Activated T-helper 2 cell treated with anti-CD3 and anti-CD28 coated beads, Interferon-gamma antibody, Interleukin-2, Interleukin-4, amounts not matched to agents 10 μg/mL and 5 μg/mL and 100 μg/mL, durations not matched to agents 14 hours and 24 hours and 36 hours (primary cell): ENCODE measurements at regions of chr2 and their contacts with region 1.

Region 1: GRCh38 chr2:25201265-25201664 is 32.9 kb upstream of the POMC start:
- DNase-seq: no peak
- H3K4me3 Mint-ChIP-seq: no peak overlapping the region
- H3K27ac Mint-ChIP-seq: no peak overlapping the region
- H3K4me1 Mint-ChIP-seq: peaks cover 2% of the 10 kb centered on the region
- H3K27me3 Mint-ChIP-seq: peaks cover 14% of the 10 kb centered on the region

Region 2: DNA sequence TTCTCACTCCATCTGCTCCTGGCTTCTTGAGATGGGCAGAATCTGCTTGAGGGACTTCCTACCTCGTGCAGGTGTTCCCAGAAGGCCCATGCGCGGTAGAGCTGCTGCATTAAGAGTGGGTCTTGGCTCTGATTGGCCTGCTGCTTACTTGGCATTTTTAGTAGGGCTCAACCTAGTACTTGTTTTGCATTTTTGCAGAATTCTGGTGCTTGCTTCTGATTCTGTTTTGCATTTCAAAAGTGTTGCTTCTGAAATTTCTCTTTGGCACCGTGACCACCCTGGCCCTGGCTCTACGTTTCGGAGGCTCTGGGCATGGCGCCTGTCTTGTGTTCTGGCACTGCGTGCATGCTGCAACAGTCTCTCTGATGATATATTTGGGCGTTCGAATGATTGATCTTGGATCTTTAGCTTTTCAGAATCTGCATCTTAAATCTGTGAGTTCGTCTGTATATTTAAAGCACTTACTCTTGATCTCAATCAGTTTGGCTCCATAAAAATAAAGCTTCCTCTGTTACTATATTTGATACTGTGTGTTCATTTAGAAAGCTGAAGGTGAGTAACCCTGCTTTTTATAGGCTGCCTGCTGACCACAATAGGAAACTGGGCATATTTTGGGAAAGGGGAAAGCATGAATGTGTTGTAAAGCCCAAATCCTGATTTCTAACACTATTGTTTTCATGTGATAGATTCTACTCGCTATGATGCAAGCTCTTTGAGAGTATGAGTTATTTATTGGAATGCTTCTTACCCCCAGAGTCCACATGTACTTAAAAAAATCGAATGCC is 137.2 kb before region 1 on chr2:
- intact Hi-C with region 1: no loop called
- DNase-seq: no peak
- H3K4me3 Mint-ChIP-seq: no peak overlapping the region
- H3K27ac Mint-ChIP-seq: no peak overlapping the region
- H3K4me1 Mint-ChIP-seq: no peaks in the 10 kb centered on the region
- H3K27me3 Mint-ChIP-seq: no peaks in the 10 kb centered on the region

Region 3: GRCh38 chr2:25131567-25132298 is 69.5 kb before region 1 on chr2:
- intact Hi-C with region 1: loop called (anchors 10 kb)
- DNase-seq: no peak
- H3K4me3 Mint-ChIP-seq: peak overlapping the region; percentile 45
- H3K27ac Mint-ChIP-seq: no peak overlapping the region
- H3K4me1 Mint-ChIP-seq: peaks cover 2% of the 10 kb centered on the region
- H3K27me3 Mint-ChIP-seq: peaks cover 53% of the 10 kb centered on the region

Region 4: DNA sequence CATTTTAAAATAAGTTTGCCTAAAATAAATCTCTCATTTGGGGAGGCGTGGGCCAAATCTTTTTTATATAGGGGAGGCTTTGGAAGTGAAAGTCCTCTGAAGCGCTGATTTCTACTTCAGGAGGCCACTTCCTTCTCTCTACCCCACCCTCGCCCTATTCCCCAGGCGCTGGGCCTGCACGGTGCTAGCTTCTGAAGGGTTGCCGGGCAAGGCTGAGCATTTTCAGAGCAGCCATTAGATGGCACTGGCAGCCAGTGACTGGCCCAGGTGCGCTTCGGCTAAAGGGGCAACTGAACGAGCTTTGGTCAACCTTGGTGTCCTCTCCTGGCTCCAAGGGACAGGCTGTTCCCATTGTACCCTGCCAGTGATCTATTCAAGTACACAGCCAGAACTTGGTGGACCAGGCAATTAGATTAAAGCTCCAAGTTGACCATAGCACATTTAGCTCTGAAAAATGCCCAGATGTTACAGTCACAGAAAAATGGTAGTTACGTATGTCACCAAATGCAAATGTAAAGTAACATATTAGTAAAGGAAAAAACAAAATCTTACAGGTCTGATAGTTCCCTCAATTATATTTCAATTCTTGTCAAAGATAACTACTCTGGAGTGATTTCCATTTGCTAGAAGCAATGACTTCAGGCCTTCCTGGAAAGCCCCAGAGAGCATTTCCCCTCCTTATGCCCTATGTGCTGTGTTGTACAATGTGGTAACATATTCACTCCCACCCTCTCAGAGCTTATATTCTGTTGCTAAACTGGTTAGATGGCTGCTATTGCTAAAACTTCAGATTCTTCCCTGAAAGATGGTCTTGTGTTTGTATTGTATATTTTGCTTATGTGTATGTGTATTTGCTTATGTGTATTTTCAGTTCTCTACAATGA is 35.0 kb before region 1 on chr2:
- intact Hi-C with region 1: loop called (anchors 2 kb)
- DNase-seq: peak; percentile 24
- H3K4me3 Mint-ChIP-seq: no peak overlapping the region
- H3K27ac Mint-ChIP-seq: no peak overlapping the region
- H3K4me1 Mint-ChIP-seq: peaks cover 14% of the 10 kb centered on the region
- H3K27me3 Mint-ChIP-seq: peaks cover 63% of the 10 kb centered on the region

Region 5: DNA sequence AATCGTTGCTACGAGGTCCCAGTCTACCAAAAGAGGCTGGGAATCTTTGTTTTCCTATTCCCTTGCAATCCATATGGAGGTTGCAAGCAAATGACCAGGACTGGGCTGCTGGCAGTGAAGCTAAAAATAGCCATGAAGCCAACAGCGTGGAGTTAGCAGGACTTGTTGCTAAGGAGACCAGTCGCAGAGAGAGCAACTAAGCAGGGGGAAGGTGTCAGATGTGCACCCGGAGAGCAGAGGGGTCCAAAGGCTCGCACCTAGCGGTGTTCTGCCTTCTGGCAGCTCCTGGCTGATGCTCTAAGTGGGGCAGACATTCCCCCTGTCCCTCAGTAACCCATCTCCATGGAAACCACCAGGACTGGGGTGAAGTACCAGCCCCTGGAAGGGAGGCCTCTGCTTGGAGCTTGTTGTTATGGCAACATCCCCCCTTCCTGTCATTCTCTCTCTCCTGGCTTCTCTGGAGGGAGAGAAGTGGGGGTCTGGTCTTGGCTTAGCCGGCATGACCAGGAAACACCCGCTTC is 55.8 kb after region 1 on chr2:
- intact Hi-C with region 1: no loop called
- DNase-seq: no peak
- H3K4me3 Mint-ChIP-seq: no peak overlapping the region
- H3K27ac Mint-ChIP-seq: no peak overlapping the region
- H3K4me1 Mint-ChIP-seq: peaks cover 15% of the 10 kb centered on the region
- H3K27me3 Mint-ChIP-seq: no peaks in the 10 kb centered on the region